Motor neuron (in vitro differentiated cells): ENCODE measurements at regions of chr21 and their contacts with region 1.

Region 1: GRCh38 chr21:45439161-45439872 is 34.4 kb downstream of the COL18A1 start:
- ATAC-seq: peak; percentile 72 to 98 (median 80)
- H3K4me3 ChIP-seq: no peak overlapping the region
- H3K27ac ChIP-seq: no peak overlapping the region
- H3K4me1 ChIP-seq: peaks cover 3 to 13% of the 10 kb centered on the region in 2 donors

Region 2: DNA sequence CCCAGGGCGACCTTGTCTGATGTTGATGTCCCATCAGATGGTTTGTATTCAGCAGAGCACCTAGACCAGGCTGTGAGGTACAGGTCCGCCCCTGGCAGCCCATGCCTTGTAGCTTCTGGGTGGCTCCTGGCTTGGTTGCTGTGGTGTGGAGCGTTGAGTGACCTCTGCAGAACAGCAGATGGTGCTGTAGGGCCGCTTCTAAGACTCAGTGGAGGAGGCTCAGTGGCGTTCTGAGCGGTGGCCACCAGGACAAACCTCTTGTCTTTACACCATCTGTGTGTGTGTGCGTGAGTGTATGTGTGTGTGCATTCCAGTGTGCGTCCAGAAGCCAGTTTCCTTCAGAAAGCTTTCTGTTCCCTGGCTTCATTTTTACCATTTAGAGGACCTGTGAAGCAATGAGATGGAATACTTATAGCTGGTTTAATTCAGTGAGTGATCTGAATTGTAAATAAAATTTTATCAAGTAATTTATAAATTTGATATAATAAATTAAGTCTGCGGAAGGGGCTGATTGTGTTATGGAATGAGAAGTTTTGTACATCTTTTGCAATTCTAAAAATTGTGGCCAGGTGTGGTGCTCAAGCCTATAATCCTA is 298.9 kb before region 1 on chr21:
- in situ Hi-C with region 1: loop called in 1 of 9 experiments (anchors 25 kb)
- ATAC-seq: peak; percentile 84 to 97 (median 90)
- H3K4me3 ChIP-seq: no peak overlapping the region
- H3K27ac ChIP-seq: no peak overlapping the region
- H3K4me1 ChIP-seq: peaks cover 10 to 17% of the 10 kb centered on the region in 2 donors

Region 3: GRCh38 chr21:45287438-45288391 is 151.6 kb before region 1 on chr21 and contains the start of gene POFUT2:
- in situ Hi-C with region 1: loop called in 2 of 9 experiments (anchors 25 kb)
- ATAC-seq: peak; percentile 65 to 80 (median 68)
- H3K4me3 ChIP-seq: peak within 1 kb of the TSS; percentile 55 to 98 (median 90)
- H3K27ac ChIP-seq: peak within 1 kb of the TSS; percentile 90 to 95
- H3K4me1 ChIP-seq: peaks cover 14 to 16% of the 10 kb centered on the region in 2 donors
- total RNA-seq, gene POFUT2: 17.3 to 40.8 (median 25.6) TPM

Region 4: DNA sequence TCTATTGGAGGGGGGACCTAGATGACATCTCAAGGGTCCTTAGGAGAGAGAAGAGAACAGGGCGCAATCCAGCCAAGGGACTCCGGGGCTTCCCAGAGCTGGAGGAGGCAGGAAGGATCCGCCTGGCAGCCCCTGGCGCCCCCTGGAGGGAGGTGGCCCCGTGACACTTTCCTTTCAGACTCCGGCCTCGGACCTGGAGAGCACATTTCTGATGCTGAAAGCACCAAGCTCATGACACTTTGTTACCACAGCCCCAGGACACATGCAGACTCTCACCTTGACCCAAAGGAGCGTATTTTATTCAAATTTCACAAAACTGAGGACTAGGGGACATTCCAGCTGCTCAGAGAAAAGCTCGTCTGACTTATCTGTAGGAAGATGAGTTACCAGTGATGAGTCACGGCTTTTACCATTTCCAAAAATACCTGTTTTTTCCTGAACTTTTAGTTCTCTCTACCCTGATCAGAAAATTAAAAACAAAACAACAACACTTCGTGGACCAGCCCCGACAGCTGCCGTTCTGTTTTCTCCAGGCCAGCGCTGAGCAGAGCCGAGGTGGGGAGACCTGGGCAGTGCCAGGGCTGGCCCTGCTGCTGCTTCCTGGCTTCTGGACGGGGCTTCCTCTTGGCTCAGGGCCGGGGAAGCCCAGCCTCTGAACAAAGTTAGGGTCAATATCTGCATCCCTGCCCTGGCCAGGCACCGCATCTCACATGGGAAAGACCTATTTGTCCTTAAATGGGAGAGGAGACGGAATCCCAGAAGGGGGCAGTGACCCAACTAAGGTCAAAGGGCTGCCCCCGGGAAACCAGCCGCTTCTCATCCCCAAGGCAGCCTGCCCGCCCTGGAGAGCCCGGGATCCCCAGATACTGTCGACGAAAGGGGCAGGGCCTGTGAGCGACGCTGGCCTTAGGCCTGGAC is 130.0 kb before region 1 on chr21:
- in situ Hi-C with region 1: loop called in 1 of 9 experiments (anchors 25 kb)
- ATAC-seq: peak; percentile 36 to 81 (median 46)
- H3K4me3 ChIP-seq: no peak overlapping the region
- H3K27ac ChIP-seq: no peak overlapping the region
- H3K4me1 ChIP-seq: peaks cover 30 to 32% of the 10 kb centered on the region in 2 donors

Region 5: DNA sequence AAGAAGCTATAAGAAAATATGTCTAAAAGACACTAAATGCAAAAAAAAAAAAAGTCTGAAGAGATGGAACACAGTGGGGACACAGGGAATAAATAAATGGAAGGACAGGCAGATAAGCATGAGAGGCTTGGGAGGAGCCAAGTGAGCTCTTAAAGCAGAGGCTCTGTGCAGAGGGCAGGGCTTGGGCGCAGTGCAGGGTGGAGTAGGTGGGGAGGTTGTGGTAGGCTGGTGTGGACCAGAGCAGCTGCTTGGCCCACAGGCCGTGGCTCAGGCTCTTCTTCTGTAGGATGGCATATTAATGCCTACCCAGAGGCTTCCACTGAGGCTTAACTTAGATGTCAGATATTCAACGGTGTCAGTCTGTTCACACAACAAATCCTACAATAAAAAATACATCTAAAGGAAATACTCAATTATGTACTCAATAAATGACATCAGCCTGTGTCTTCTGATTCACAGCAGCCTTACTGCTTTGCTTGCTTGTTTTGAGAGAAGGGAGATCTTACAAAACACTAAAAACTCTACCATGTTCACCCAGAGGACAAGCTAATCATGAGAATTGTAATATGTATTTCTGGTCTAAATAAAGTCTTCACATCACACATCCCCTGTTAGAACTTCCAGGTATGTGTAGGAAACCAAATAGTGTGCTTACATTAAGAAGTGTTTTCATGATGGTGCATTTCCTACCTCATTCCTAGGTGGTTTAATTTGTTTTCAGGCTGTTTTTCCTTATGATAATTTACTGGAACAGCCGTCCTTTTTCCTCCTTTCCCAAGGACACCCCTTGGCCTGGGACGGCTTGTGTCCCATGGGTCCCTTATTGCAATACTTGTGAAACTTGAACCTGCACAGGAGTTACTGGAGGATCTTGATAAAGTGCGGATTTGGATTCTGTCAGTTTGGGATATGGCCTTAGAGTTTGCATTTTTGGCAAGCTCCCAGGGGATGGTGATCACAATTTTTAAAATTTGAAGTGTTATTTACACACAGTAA is 1044.3 kb after region 1 on chr21:
- in situ Hi-C with region 1: no loop called
- ATAC-seq: peak in 5 of 8 experiments; percentile 45 to 100 (median 75)
- H3K4me3 ChIP-seq: no peak overlapping the region
- H3K27ac ChIP-seq: no peak overlapping the region
- H3K4me1 ChIP-seq: no peaks in the 10 kb centered on the region